Psoas muscle (tissue), 8 donors: ENCODE measurements at regions of chr17 and their contacts with region 1.

Region 1: GRCh38 chr17:37551788-37552187 is 57.4 kb downstream of the SYNRG start:
- DNase-seq: no peak
- ATAC-seq: no peak
- H3K4me3 ChIP-seq: no peak overlapping the region
- H3K27ac ChIP-seq: no peak overlapping the region
- H3K4me1 ChIP-seq: peaks cover 28% of the 10 kb centered on the region
- H3K27me3 ChIP-seq: no peaks in the 10 kb centered on the region
- CTCF ChIP-seq: no peak

Region 2: DNA sequence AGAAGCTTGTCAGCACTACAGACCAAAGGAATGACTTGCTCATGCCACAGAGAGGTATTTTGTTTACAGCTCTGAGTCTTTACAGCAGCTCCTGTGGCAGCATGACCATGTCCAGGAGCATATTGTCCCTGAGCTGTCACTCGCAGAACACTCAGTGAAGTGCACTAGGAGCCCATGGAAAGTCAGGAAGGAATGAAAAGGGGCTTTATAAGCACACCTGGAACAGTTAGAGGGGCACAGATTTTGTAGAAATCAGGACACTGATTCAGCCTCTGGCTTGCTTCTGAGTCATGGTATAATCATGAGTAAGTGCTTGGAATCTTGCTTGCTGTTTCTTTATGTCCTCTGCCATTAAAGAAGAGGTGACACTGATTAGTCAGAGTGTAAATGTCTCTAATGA is 104.1 kb before region 1 on chr17:
- intact Hi-C with region 1: loop called in 1 of 2 experiments (anchors 10 kb)
- DNase-seq: no peak
- ATAC-seq: peak in 3 of 4 donors; percentile 65 to 71 (median 67)
- H3K4me3 ChIP-seq: no peak overlapping the region
- H3K27ac ChIP-seq: peak overlapping the region; percentile 50
- H3K4me1 ChIP-seq: peaks cover 12% of the 10 kb centered on the region
- H3K27me3 ChIP-seq: no peaks in the 10 kb centered on the region
- CTCF ChIP-seq: no peak

Region 3: DNA sequence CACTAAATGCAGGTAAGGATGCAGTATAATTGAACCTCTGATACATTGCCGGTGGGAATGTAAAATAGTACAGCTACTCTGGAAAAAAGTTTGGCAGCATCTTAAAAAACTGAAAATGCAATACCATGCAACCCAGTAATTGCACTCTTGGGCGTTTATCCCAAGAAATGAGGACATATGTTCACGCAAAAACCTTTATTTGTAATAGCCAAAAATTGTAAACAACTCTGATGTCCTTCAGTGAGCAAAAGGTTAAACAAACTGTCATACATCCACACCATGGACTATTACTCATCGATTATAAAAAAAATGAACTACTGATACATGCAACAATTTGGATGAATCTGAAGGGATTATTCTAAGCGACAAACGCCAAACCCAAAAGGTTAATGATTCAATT is 40.5 kb after region 1 on chr17:
- intact Hi-C with region 1: no loop called
- DNase-seq: no peak
- ATAC-seq: peak in 1 of 4 donors; percentile 30
- H3K4me3 ChIP-seq: no peak overlapping the region
- H3K27ac ChIP-seq: no peak overlapping the region
- H3K4me1 ChIP-seq: no peaks in the 10 kb centered on the region
- H3K27me3 ChIP-seq: no peaks in the 10 kb centered on the region
- CTCF ChIP-seq: no peak

Region 4: DNA sequence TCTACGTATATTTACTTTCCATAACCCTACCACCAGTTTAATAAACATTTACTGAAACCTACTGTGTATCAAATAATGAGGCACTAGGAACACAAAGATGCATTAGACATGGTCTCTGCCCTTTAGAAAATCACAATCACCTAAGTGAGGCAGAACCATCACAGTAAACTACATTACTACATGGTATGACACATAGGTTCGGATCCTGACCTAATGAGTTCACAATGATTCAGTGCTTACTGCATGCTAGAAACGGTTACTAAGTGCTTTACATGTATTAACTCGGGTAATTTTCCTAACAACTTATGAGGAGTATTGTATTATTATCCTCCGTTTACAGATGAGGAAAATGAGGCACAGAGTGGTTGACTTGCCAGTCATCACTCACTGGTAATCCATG is 62.6 kb after region 1 on chr17:
- intact Hi-C with region 1: no loop called
- DNase-seq: no peak
- ATAC-seq: no peak
- H3K4me3 ChIP-seq: no peak overlapping the region
- H3K27ac ChIP-seq: no peak overlapping the region
- H3K4me1 ChIP-seq: no peaks in the 10 kb centered on the region
- H3K27me3 ChIP-seq: no peaks in the 10 kb centered on the region
- CTCF ChIP-seq: no peak